ENCODE measurements at regions of chr20 and their contacts with region 1.

Region 1: GRCh38 chr20:19974626-19975435 is 42.3 kb upstream of the NAA20 start:
- DNase-seq: peak; percentile 92

Region 2: GRCh38 chr20:19757487-19758132 is 217.2 kb before region 1 on chr20:
- intact Hi-C with region 1: loop called (anchors 2 kb)
- DNase-seq: peak; percentile 94

Region 3: GRCh38 chr20:19934792-19935491 is 39.9 kb before region 1 on chr20:
- intact Hi-C with region 1: loop called (anchors 5 kb)
- DNase-seq: no peak

Region 4: DNA sequence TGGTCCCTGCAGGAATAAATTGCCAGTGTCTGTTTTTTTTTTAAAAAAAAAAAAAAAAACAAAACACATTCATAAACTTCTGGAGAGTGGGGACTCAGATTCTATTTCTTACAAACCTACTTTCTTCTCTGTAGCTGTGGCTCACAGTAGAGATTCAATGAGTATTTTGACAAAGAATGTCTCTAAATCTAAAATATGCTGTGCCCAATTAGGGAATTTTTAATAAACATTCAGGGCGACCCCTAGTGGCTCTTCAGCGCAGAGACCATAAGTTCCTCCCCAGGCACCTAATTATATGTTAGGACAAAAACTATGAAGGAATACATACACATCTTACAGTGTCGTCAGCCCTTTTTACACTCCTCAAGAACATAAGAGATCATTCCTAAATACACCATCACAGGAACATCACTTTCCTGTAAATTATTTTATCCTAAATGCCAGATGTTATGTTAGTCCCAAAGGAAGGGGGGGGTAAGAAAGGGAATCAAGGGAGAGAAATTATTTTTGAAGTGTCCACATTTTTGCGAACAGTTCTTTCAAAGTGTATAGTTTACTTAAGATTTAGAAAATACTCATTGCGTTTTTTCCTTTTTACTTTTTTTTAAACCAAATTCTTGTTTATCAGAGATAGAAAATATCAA is 20.5 kb after region 1 on chr20:
- intact Hi-C with region 1: loop called (anchors 2 kb)
- DNase-seq: no peak

Measured in cardiac septum (tissue), 1 donor.